Activated T-helper 1 cell treated with anti-CD3 and anti-CD28 coated beads, Interleukin-12 subunit alpha, Interleukin-12 subunit beta, Interleukin-2, Interleukin-4 antibody, amounts not matched to agents 30 ng/mL and 10 ng/mL and 1 ng/mL, durations not matched to agents 14 hours and 24 hours and 36 hours (primary cell): ENCODE measurements at regions of chr1 and their contacts with region 1.

Region 1: DNA sequence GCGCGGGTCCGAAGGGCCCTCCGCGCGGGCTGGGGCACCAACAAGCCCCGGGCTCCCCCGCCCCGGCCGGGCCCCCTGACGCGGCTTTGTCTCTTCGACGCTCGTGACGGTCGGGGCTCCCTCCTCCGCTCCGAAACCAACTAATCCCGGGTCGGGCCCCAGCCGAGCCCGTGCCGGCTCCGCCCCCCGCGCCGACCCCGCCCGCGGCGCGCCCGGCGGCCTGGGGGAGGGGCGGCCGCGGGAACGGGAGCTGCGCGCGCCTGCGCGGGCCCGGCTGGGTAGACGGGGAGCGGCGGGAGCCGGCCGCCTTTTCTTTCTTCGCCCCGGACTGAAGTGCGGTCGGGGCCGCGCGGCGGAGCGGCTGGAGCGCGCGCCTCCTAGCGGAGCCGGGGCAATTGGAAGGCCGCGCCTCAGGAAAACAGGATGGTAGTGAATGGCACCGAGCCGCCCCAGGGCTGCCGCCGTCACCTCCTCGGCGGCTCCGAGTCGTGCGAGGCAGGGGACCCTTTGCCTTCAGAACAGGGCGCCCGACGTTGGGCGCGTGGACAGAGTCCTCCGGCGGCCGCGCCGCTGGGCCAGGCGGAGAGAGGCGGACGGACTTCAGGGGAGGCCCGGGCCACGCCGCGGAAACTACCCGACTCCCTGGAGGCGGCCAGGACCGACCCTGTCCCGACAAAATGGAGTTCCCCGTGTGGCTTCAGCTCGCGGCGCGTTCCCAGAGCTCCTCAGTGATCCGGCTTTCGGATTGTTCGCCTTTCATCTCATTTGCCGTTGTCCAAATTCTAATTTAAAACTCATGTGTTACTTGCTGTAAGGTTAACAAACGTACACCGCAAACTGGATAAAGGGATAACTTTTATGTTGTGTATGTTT is at the start of gene TP53BP2:
- DNase-seq: peak; percentile 81
- H3K4me3 Mint-ChIP-seq: peak within 1 kb of the TSS; percentile 95
- H3K27ac Mint-ChIP-seq: peak within 1 kb of the TSS; percentile 96
- H3K4me1 Mint-ChIP-seq: peaks cover 42% of the 10 kb centered on the region
- H3K27me3 Mint-ChIP-seq: peaks cover 5% of the 10 kb centered on the region
- total RNA-seq, gene TP53BP2: 40.4 and 47.2 TPM in 2 replicates

Region 2: GRCh38 chr1:223700942-223701637 is 145.0 kb before region 1 on chr1:
- intact Hi-C with region 1: loop called (anchors 1 kb)
- DNase-seq: no peak
- H3K4me3 Mint-ChIP-seq: no peak overlapping the region
- H3K27ac Mint-ChIP-seq: peak overlapping the region; percentile 83
- H3K4me1 Mint-ChIP-seq: peaks cover 54% of the 10 kb centered on the region
- H3K27me3 Mint-ChIP-seq: peaks cover 4% of the 10 kb centered on the region

Region 3: DNA sequence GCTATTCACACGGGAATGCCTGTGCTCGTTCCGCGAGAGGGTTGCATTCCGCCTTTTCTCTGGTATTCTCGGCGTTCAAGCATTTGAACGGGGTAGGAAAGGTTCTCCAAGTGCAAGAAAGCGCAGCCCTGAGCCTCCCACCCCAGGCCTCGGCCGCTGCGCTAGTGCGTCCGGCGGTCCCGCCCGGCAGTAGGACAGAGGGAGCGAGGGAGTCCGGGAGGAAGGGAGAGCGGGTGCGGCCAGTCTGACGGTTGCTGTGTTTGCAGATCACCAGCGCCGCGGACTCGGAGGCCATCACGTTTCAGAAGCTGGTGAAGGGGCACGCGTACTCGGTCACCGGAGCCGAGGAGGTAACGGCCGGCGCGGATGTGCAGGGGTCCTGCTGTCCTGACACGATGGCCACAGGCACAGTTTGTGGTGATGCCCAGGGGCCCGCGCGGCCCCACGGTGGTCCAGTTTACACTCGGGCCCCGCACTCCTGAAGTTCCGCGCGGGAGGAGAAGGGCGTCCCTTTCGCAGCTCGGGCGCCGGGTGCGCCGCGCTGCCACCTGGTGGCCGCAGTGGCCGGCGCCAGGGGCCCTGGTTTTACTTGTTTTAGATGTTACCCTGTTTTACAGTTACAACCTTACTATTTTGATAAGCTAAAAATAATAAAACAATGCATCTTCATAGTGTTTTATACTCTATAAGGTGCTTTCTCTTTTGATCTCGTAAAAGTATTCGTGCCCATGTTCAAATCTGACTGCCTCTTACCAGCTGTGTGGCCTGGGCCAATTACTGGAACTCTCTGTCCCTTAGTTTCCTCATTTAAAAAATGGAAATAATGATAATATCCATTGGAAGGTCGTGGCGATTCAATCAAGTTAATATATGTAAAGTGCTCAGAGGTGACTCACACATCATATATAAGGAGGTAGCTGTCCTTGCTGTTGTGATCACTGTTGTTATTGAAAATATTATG is 97.0 kb before region 1 on chr1:
- intact Hi-C with region 1: loop called (anchors 1 kb)
- DNase-seq: peak; percentile 39
- H3K4me3 Mint-ChIP-seq: peak overlapping the region; percentile 72
- H3K27ac Mint-ChIP-seq: peak overlapping the region; percentile 55
- H3K4me1 Mint-ChIP-seq: peaks cover 20% of the 10 kb centered on the region
- H3K27me3 Mint-ChIP-seq: no peaks in the 10 kb centered on the region

Region 4: GRCh38 chr1:223811634-223812415 is 34.2 kb before region 1 on chr1:
- intact Hi-C with region 1: loop called (anchors 1 kb)
- DNase-seq: no peak
- H3K4me3 Mint-ChIP-seq: no peak overlapping the region
- H3K27ac Mint-ChIP-seq: no peak overlapping the region
- H3K4me1 Mint-ChIP-seq: peaks cover 14% of the 10 kb centered on the region
- H3K27me3 Mint-ChIP-seq: no peaks in the 10 kb centered on the region

Region 5: DNA sequence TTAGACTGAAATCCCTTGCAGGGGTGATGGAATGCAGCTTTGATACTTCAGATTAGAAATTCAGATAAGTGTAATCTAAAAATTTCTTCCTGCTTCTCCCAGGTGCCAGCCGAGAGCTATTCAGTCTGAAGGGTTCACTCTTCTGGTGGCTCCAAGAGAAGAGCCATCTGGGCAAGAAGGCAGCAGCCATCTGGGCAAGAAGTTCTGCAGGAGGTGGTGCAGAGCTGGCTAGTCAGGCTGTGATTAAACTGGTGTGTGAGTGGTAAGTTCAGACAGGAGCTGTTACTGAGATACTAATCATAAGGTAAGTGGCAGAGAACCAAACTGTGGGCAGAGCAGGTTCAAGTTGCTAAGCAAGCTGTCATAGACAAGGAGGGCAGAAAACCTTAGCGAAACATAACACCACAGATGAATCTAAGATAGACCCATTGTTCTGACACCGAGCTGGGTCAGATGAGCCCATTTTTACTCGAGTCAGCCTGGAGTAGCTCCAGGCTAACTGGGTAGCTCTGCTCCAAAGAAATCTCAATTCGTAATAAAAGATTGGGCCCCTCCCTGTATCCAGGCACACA is 14.1 kb after region 1 on chr1:
- intact Hi-C with region 1: no loop called
- DNase-seq: no peak
- H3K4me3 Mint-ChIP-seq: no peak overlapping the region
- H3K27ac Mint-ChIP-seq: no peak overlapping the region
- H3K4me1 Mint-ChIP-seq: no peaks in the 10 kb centered on the region
- H3K27me3 Mint-ChIP-seq: peaks cover 21% of the 10 kb centered on the region

Region 6: DNA sequence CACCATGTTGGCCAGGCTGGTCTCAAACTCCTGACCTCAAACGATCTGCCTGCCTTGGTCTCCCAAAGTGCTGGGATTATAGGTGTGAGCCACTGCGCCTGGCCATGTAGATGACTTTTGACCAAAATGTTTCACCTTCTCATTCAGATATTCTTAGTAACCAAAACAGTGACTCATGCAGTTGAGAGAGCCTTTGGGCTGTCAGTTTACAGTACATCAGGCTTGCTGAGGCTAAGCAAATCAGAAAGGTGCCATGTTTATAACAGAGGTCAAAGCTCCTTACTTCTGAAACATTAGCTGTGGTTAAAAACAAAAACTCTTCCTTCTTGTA is 531.6 kb after region 1 on chr1:
- intact Hi-C with region 1: loop called (anchors 5 kb)
- DNase-seq: no peak
- H3K4me3 Mint-ChIP-seq: peak overlapping the region; percentile 66
- H3K27ac Mint-ChIP-seq: peak overlapping the region; percentile 94
- H3K4me1 Mint-ChIP-seq: peaks cover 91% of the 10 kb centered on the region
- H3K27me3 Mint-ChIP-seq: no peaks in the 10 kb centered on the region